ENCODE measurements at regions of chr18 and their contacts with region 1.

Region 1: GRCh38 chr18:6648581-6648980 is 80.9 kb upstream of the ARHGAP28 start:
- DNase-seq: no peak
- H3K4me3 ChIP-seq: no peak overlapping the region
- H3K27ac ChIP-seq: no peak overlapping the region
- H3K27me3 ChIP-seq: peaks cover 0 to 11% (median 0%) of the 10 kb centered on the region in 45 donors
- CTCF ChIP-seq: no peak

Region 2: GRCh38 chr18:6589923-6590322 is 58.7 kb before region 1 on chr18:
- intact Hi-C with region 1: loop called in 1 of 2 experiments (anchors 10 kb)
- DNase-seq: no peak
- H3K4me3 ChIP-seq: no peak overlapping the region
- H3K27ac ChIP-seq: no peak overlapping the region
- H3K27me3 ChIP-seq: no peaks in the 10 kb centered on the region
- CTCF ChIP-seq: no peak